Activated B cell treated with CpG ODN at 0.5 μM for 24 hours (primary cell): ENCODE measurements at regions of chr1 and their contacts with region 1.

Region 1: DNA sequence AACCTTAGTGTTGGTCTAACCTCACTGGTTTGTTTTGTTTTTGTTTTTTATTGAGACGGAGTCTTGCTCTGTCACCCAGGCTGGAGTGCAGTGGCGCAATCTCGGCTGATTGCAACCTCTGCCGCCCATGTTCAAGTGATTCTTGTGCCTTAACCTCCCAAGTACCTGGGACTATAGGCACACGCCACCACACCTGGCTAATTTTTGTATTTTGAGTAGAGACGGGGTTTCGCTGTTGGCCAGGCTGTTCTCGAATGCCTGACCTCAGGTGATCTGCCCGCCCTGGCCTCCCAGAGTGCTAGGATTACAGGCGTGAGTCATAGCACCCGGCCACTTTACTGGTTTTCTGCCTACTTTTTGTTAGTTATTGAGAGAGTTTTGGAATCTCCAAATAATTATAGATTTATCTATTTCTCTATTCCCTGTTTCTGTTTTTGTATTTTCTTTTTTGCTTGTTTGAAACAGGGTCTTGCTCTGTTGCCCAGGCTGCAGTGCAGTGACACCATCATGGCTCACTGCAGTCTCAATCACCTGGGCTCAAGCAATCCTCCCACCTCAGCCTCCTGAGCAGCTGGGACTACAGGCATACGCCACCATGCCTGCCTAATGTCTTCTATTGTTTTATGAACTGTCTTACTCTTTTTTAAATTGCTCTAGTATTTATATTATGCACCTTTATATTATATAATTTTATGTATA is 21.4 kb downstream of the SMG7 start:
- DNase-seq: no peak
- ATAC-seq: no peak
- H3K4me3 Mint-ChIP-seq: no peak overlapping the region
- H3K27ac Mint-ChIP-seq: no peak overlapping the region
- H3K4me1 Mint-ChIP-seq: peaks cover 62% of the 10 kb centered on the region
- H3K27me3 Mint-ChIP-seq: no peaks in the 10 kb centered on the region
- CTCF ChIP-seq: no peak

Region 2: DNA sequence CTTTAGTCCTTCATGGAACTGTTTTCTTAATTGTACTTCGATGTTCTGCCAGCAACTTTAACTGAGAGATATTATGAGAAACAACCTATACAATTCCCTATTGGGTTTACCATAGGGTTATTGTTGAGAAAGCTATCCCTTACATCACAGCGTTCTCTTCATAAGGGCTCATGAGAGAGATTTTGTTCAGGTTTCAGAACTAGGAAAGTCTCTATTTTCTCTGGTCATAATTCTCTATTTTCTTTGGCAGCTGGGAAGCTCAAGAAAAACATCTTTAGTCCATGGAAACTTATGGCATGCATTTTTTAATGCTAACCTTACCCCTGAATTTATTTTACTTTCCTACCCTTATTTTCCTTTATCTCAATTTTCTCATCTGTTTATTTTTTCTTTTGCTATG is 113.7 kb before region 1 on chr1:
- CTCF ChIA-PET with region 1: no interaction called
- POLR2A ChIA-PET with region 1: no interaction called
- intact Hi-C with region 1: no loop called
- DNase-seq: no peak
- ATAC-seq: no peak
- H3K4me3 Mint-ChIP-seq: no peak overlapping the region
- H3K27ac Mint-ChIP-seq: no peak overlapping the region
- H3K4me1 Mint-ChIP-seq: no peaks in the 10 kb centered on the region
- H3K27me3 Mint-ChIP-seq: peaks cover 15% of the 10 kb centered on the region
- CTCF ChIP-seq: no peak

Region 3: DNA sequence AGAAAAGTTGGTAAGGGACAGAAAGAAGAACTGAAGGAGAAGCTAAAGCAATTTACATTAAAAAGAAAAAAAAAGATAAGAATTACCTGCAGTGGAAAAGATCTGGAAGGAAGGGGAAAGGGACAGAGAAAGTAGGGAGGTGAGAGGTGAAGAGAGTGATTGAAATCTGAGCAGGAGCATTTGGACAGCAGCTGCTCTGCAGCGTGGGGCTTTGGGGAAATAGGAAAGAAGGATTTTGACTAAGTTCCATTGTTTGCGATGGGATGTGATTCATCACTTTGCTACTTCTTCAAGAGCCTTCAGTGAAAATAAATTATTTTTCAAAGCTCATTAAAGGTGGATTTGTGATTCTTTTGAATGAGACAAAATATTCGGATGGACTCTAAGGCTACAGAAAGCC is 49.5 kb before region 1 on chr1:
- CTCF ChIA-PET with region 1: no interaction called
- POLR2A ChIA-PET with region 1: no interaction called
- intact Hi-C with region 1: no loop called
- DNase-seq: no peak
- ATAC-seq: no peak
- H3K4me3 Mint-ChIP-seq: no peak overlapping the region
- H3K27ac Mint-ChIP-seq: no peak overlapping the region
- H3K4me1 Mint-ChIP-seq: no peaks in the 10 kb centered on the region
- H3K27me3 Mint-ChIP-seq: no peaks in the 10 kb centered on the region
- CTCF ChIP-seq: no peak

Region 4: GRCh38 chr1:183480971-183481441 is 12.7 kb before region 1 on chr1:
- CTCF ChIA-PET with region 1: interaction called, 4 read pairs
- POLR2A ChIA-PET with region 1: interaction called, 3 read pairs
- intact Hi-C with region 1: loop called (anchors 2 kb)
- DNase-seq: no peak
- ATAC-seq: peak; percentile 82
- H3K4me3 Mint-ChIP-seq: peak overlapping the region; percentile 21
- H3K27ac Mint-ChIP-seq: peak overlapping the region; percentile 74
- H3K4me1 Mint-ChIP-seq: peaks cover 64% of the 10 kb centered on the region
- H3K27me3 Mint-ChIP-seq: no peaks in the 10 kb centered on the region
- CTCF ChIP-seq: no peak

Region 5: GRCh38 chr1:183506561-183506960 is 12.9 kb after region 1 on chr1:
- CTCF ChIA-PET with region 1: no interaction called
- POLR2A ChIA-PET with region 1: no interaction called
- intact Hi-C with region 1: loop called (anchors 2 kb)
- DNase-seq: no peak
- ATAC-seq: no peak
- H3K4me3 Mint-ChIP-seq: no peak overlapping the region
- H3K27ac Mint-ChIP-seq: no peak overlapping the region
- H3K4me1 Mint-ChIP-seq: peaks cover 11% of the 10 kb centered on the region
- H3K27me3 Mint-ChIP-seq: no peaks in the 10 kb centered on the region
- CTCF ChIP-seq: no peak